ENCODE measurements at regions of chr1 and their contacts with region 1.

Region 1: DNA sequence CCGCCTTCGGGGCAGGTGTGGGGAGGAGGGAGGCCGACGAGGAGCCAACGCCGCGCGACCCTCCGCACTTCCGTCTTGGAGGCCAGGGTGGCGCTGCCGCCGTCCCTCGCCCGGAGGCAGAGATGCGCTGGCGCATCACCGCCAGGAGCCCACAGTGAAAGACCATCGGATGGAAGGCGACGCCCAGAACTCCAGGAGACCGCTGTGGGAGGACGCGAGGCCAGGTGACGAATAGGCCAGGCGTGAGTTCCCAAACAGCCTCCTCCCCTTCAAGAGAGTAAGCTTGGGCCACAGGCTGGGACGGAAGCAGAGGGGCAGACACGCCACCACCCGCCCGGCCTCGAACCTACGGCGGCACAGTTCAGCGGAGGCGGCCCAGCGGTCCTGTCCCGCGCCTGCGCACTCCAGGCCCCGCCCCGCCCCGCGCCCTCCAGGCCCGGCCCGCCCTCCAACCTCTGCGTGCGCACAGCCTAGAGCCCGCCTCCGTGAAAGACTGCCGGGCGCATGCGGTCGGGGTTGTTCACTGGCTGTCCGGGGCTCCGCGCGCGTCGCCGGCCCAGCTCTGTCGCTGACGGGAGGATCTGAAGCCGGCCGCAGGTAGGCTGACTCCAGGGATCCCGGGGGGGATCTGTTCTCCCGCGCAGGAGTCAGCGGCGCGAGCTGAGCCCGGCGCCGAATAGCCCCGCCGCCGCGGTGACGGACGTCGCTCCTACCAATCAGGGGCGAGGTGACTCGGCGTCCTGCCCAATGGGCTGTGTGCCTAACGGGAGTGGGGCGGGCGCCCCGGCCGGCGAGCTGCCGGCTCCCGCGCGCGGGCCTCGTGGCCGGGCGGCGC is at the start of gene CTPS1:
- DNase-seq: peak; percentile 88 to 97 (median 95)
- ATAC-seq: peak; percentile 90 to 92 (median 90)
- H3K4me3 ChIP-seq: peak within 1 kb of the TSS; percentile 73 to 85
- H3K4me3 Mint-ChIP-seq: peak within 1 kb of the TSS; percentile 83 to 88 (median 87)
- H3K27ac ChIP-seq: peak within 1 kb of the TSS; percentile 87
- H3K27ac Mint-ChIP-seq: peak within 1 kb of the TSS; percentile 82 to 92
- H3K4me1 ChIP-seq: peaks cover 6 to 24% of the 10 kb centered on the region in 2 experiments
- H3K4me1 Mint-ChIP-seq: peaks cover 25 to 29% (median 27%) of the 10 kb centered on the region in 3 donors
- H3K27me3 ChIP-seq: no peaks in the 10 kb centered on the region
- H3K27me3 Mint-ChIP-seq: no peaks in the 10 kb centered on the region
- total RNA-seq, gene CTPS1: 26.0 to 57.2 (median 29.1) TPM

Region 2: GRCh38 chr1:40939320-40940059 is 40.0 kb before region 1 on chr1:
- CTCF ChIA-PET with region 1: no interaction called
- POLR2A ChIA-PET with region 1: no interaction called
- DNase-seq: no peak
- ATAC-seq: no peak
- H3K4me3 ChIP-seq: no peak overlapping the region
- H3K4me3 Mint-ChIP-seq: no peak overlapping the region
- H3K27ac ChIP-seq: no peak overlapping the region
- H3K27ac Mint-ChIP-seq: no peak overlapping the region
- H3K4me1 ChIP-seq: no peaks in the 10 kb centered on the region
- H3K4me1 Mint-ChIP-seq: no peaks in the 10 kb centered on the region
- H3K27me3 ChIP-seq: no peaks in the 10 kb centered on the region
- H3K27me3 Mint-ChIP-seq: peaks cover 3 to 4% of the 10 kb centered on the region in 2 donors

Region 3: GRCh38 chr1:41003640-41004220 is 24.3 kb after region 1 on chr1:
- CTCF ChIA-PET with region 1: interaction called in 1 of 2 experiments, 17 read pairs
- POLR2A ChIA-PET with region 1: interaction called in 1 of 2 experiments, 6 read pairs
- DNase-seq: peak; percentile 60 to 95 (median 88)
- ATAC-seq: peak; percentile 97 to 100 (median 100)
- H3K4me3 ChIP-seq: no peak overlapping the region
- H3K4me3 Mint-ChIP-seq: peak overlapping the region in 1 of 3 donors; percentile 32
- H3K27ac ChIP-seq: peak overlapping the region; percentile 7
- H3K27ac Mint-ChIP-seq: peak overlapping the region; percentile 21 to 46
- H3K4me1 ChIP-seq: peaks cover 5 to 13% of the 10 kb centered on the region in 2 experiments
- H3K4me1 Mint-ChIP-seq: peaks cover 18 to 22% (median 21%) of the 10 kb centered on the region in 3 donors
- H3K27me3 ChIP-seq: no peaks in the 10 kb centered on the region
- H3K27me3 Mint-ChIP-seq: no peaks in the 10 kb centered on the region

Measured in T-cell (primary cell).